ENCODE measurements at regions of chr4 and their contacts with region 1.

Region 1: DNA sequence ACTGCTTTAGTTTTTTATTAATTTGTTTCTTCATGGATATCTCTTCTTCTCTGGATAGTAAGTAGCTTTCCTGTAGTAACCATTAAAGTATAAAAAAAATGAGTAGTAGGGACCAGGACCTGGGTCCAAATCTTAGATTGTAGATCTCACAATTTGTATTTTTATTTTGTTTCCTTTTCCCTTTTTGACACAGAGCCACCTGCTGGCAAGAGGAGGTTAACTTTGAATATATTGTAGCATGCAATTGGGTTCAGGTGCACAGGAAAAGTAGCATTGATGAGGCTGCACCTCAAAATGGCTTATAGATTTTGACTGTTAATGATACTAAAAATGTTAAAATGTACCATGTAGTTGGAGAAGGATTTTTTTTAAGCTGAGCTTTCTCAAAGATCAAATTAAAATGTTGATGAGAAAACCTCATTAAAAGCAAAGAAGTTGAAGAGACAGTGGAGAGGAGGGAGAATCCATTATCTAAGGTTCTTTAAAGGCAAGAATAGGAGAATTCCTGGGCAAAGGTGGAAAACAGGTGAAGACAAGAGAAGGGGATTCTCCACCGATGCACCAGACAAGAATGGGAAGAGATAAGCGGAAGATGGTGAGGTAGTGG is 48.3 kb upstream of the HPGDS start:
- H3K4me3 Mint-ChIP-seq: no peak overlapping the region
- H3K27ac Mint-ChIP-seq: no peak overlapping the region
- H3K4me1 Mint-ChIP-seq: no peaks in the 10 kb centered on the region
- H3K27me3 Mint-ChIP-seq: no peaks in the 10 kb centered on the region

Region 2: GRCh38 chr4:94304365-94304971 is 86.4 kb before region 1 on chr4:
- intact Hi-C with region 1: loop called (anchors 1 kb)
- H3K4me3 Mint-ChIP-seq: no peak overlapping the region
- H3K27ac Mint-ChIP-seq: no peak overlapping the region
- H3K4me1 Mint-ChIP-seq: no peaks in the 10 kb centered on the region
- H3K27me3 Mint-ChIP-seq: no peaks in the 10 kb centered on the region

Region 3: GRCh38 chr4:94334962-94335361 is 55.9 kb before region 1 on chr4:
- intact Hi-C with region 1: loop called (anchors 2 kb)
- H3K4me3 Mint-ChIP-seq: no peak overlapping the region
- H3K27ac Mint-ChIP-seq: no peak overlapping the region
- H3K4me1 Mint-ChIP-seq: no peaks in the 10 kb centered on the region
- H3K27me3 Mint-ChIP-seq: no peaks in the 10 kb centered on the region

Region 4: DNA sequence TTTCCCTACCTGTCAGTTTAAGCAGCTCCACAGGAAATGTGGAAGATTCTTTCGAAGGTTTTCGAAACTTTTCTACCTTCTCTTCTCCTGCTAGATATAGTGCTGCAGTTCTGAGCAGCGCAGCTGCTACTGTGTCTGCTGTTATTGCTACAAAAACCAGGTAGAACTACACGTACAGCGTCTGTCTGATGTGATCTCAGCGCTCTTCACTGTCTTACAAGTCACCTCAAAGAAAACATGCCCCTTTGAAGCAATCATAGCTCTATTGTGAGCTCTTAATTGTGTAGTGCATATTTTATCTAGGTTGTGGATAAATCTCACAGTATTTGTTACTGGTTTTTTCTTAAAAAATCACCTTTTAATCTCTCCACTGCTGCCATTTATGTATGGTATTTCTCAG is 219.2 kb after region 1 on chr4:
- intact Hi-C with region 1: no loop called
- H3K4me3 Mint-ChIP-seq: no peak overlapping the region
- H3K27ac Mint-ChIP-seq: no peak overlapping the region
- H3K4me1 Mint-ChIP-seq: peaks cover 3% of the 10 kb centered on the region
- H3K27me3 Mint-ChIP-seq: no peaks in the 10 kb centered on the region

Region 5: DNA sequence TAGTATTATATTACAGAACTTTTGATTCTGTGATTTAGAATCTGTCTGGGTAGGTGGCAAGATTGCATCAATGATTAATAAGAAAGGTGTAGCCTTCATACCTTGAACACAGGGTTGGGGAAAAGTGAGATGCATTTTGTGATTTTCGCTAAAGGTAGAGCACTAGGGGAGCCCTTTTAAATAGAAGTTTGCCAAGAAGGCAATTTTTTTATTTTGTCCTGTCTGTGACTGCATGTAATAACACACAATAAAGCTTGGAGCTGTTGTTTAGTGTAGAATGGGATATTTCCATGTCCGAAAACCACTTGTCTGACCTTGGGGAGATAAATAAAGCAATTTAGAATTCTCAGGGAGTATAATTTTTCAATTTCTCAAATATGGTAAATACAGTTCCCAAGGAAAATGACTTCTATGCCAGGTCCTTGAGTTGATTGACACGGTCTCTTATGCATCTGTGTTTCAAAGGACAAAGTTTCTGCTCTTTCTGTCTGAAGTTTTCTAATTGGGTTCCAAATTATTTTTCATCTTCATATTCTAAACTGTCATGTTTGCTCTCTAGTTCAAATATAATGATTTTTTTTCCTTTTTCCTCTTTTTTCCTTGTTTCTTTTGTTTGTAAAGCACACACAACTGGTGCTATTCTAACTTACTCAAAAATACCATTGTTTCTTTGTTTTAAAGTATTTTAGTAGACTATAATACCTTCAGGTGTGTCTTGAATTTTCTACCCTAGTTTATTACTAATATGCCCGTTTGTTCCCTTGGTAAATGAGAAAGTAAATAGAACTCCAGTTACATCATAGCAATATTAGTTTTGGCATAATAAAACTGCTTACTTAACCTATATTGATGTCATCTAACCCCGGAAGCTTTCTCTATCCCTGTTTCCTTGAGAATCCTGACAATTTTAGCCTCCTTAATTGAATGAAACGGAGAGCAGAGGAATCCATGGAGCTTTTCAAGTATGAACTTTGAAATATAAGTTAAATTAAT is 279.1 kb after region 1 on chr4:
- intact Hi-C with region 1: no loop called
- H3K4me3 Mint-ChIP-seq: no peak overlapping the region
- H3K27ac Mint-ChIP-seq: no peak overlapping the region
- H3K4me1 Mint-ChIP-seq: no peaks in the 10 kb centered on the region
- H3K27me3 Mint-ChIP-seq: no peaks in the 10 kb centered on the region

Measured in dendritic cell treated with granulocyte-macrophage colony-stimulating factor and Interleukin-4, amounts not matched to agents 40 ng/mL and 50 ng/mL, for 4 days (primary cell).